Common myeloid progenitor, CD34-positive (primary cell): ENCODE measurements at regions of chr12 and their contacts with region 1.

Region 1: DNA sequence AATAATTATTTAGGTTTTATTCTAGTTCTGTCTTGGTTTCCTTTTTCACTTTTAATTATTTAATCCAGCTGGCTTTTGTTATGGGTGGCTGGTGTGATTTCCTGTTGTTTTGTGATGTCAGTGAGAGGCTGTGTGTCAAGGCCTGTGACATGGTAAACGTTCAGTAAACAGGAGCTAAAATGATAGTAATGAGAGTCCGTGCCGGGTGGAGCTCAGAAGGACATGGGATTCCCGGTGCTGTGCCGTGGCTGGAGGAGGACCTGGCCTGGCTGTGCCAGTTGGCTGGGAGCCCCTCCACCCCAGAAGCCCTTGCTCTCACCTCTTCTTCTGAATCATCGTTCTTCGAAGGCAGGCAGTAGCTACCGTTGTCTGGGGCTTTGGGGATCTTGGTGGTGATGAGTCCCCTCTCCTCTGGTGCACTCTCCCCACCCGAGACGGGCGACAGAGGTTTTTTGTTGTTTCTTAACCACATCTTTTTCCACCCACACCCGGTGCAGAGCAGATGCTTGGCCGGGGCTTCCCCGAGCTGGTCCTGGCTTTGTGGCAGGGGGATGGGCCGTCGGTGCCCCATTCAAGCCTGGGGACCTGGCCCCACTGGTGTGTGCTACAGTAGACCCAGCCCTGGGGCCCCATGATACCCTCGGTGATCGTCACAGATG is 29.1 kb downstream of the SH2B3 start:
- DNase-seq: peak; percentile 74 to 96 (median 95)
- H3K4me3 ChIP-seq: peak overlapping the region in 4 of 7 experiments; percentile 13 to 59 (median 50)
- H3K27ac ChIP-seq: peak overlapping the region; percentile 41 to 83
- H3K4me1 ChIP-seq: peaks cover 26 to 99% (median 97%) of the 10 kb centered on the region in 4 experiments
- H3K27me3 ChIP-seq: no peaks in the 10 kb centered on the region

Region 2: GRCh38 chr12:111405149-111405860 is 29.5 kb before region 1 on chr12:
- CTCF ChIA-PET with region 1: interaction called, 820 read pairs
- POLR2A ChIA-PET with region 1: interaction called, 8 read pairs
- DNase-seq: peak; percentile 97 to 98 (median 98)
- H3K4me3 ChIP-seq: peak overlapping the region; percentile 24 to 98 (median 73)
- H3K27ac ChIP-seq: peak overlapping the region in 1 of 2 experiments; percentile 81
- H3K4me1 ChIP-seq: peaks cover 17 to 68% (median 65%) of the 10 kb centered on the region in 4 experiments
- H3K27me3 ChIP-seq: no peaks in the 10 kb centered on the region

Region 3: GRCh38 chr12:111444925-111445725 is 10.3 kb after region 1 on chr12:
- CTCF ChIA-PET with region 1: interaction called, 484 read pairs
- POLR2A ChIA-PET with region 1: interaction called, 17 read pairs
- DNase-seq: peak; percentile 81 to 95 (median 94)
- H3K4me3 ChIP-seq: peak overlapping the region in 2 of 7 experiments; percentile 8 to 12
- H3K27ac ChIP-seq: peak overlapping the region; percentile 10 to 66
- H3K4me1 ChIP-seq: peaks cover 20 to 89% (median 75%) of the 10 kb centered on the region in 4 experiments
- H3K27me3 ChIP-seq: no peaks in the 10 kb centered on the region

Region 4: GRCh38 chr12:111471236-111471635 is 36.4 kb after region 1 on chr12:
- CTCF ChIA-PET with region 1: no interaction called
- POLR2A ChIA-PET with region 1: no interaction called
- DNase-seq: no peak
- H3K4me3 ChIP-seq: no peak overlapping the region
- H3K27ac ChIP-seq: peak overlapping the region in 1 of 2 experiments; percentile 55
- H3K4me1 ChIP-seq: peaks cover 0 to 3% (median 0%) of the 10 kb centered on the region in 4 experiments
- H3K27me3 ChIP-seq: no peaks in the 10 kb centered on the region